IMR-90 (cell line): ENCODE measurements at regions of chr14 and their contacts with region 1.

Region 1: DNA sequence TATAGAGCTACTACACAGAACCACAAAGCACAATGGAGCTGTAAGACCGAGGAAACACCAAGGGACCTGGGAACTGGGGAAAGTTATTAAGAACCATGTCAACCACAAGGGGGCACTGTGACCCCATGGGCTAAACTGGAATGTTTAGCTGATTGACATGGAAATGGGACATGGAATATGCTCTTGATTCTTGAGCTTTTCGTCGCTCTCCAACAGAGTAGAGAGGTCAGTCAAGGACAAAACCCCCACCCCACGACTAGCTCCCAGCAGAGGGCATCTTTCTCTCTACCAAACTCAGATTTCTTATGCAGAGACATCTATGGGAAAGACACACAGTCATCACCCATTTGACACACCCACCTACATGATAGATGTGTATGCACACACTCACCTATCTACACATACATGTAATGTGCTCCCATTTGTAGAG is 10.1 kb downstream of the NDRG2 start:
- DNase-seq: peak; percentile 83
- ATAC-seq: peak; percentile 90
- H3K4me3 ChIP-seq: no peak overlapping the region
- H3K27ac ChIP-seq: no peak overlapping the region
- H3K4me1 ChIP-seq: no peaks in the 10 kb centered on the region
- H3K27me3 ChIP-seq: peaks cover 23% of the 10 kb centered on the region
- CTCF ChIP-seq: peak; percentile 96
- POLR2A ChIP-seq: no peak
- RAD21 ChIP-seq: peak; percentile 96

Region 2: DNA sequence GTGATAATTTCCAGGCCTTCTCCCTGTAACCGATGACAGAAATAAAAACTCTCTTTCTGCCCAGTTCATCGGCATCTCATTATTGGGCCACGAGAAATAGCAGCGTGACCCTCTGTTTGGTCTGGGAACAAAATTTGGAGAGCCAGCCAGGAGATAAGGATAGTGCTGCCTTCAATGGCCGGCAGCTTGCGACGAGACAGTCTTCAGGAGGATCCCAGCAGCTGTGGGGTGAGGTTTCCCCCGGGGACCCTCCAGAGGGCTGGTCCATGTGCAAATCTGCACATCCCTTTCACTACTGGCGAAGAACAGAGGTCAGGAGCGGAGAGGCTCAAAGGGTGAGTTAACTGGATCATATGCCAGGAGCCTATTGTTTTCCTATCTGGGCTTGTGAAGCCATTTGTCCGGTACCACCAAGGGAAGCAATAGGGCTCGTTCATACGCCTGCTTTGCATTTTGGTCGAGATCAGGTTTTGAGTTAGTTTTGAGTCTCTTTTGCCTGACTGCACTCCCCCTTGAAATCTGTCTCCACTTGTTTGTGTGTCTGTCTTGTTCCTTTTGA is 10.9 kb before region 1 on chr14:
- CTCF ChIA-PET with region 1: interaction called, 24 read pairs
- POLR2A ChIA-PET with region 1: no interaction called
- dilution Hi-C with region 1: no loop called
- in situ Hi-C with region 1: no loop called
- intact Hi-C with region 1: no loop called
- DNase-seq: no peak
- ATAC-seq: no peak
- H3K4me3 ChIP-seq: no peak overlapping the region
- H3K27ac ChIP-seq: no peak overlapping the region
- H3K4me1 ChIP-seq: 0 out of 2 replicates have a peak, but pooled peaks cover under 1% of the 10 kb centered on the region
- H3K27me3 ChIP-seq: peaks cover 5% of the 10 kb centered on the region
- CTCF ChIP-seq: no peak
- POLR2A ChIP-seq: no peak
- RAD21 ChIP-seq: no peak

Region 3: DNA sequence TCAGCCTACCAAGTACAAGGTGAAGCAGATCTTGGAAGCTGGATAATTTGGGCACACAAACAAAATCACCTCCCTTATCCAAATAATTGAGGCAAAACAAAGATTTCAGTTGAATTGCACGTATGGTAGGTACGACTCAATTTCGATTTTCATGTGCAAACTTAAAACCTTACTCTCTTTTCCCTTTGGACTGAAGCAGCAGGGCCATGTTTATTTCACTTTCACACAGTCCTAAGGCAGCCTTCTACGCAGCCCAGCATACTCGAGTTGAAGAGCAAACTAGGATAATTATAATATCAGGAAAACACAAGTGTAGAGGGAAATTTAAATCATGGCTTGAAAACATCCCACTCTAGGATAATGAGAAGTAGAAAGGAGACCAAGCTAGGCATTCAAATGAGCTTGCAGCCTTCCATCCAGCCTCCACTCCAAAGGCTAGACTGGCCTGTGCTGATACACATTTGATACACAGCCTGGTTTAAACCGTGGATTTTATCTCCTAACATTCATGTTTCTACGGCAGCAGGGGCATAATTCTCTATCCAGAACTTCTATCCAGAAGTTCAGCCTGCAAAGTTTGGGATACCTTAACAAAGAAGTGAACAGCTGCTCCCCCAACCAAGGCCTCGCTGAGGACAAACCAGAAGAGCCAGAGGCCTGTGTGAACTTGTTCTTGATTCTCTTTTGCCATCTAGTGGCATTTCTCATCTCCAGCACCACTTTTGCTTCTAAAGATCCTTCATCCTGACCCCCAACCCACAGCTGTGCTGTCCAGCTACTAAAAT is 25.0 kb after region 1 on chr14:
- CTCF ChIA-PET with region 1: interaction called, 37 read pairs
- POLR2A ChIA-PET with region 1: no interaction called
- dilution Hi-C with region 1: no loop called
- in situ Hi-C with region 1: no loop called
- intact Hi-C with region 1: loop called (anchors 1 kb)
- DNase-seq: peak; percentile 67
- ATAC-seq: peak; percentile 81
- H3K4me3 ChIP-seq: no peak overlapping the region
- H3K27ac ChIP-seq: no peak overlapping the region
- H3K4me1 ChIP-seq: peaks cover 2% of the 10 kb centered on the region; the same call in 1 of the 2 replicates
- H3K27me3 ChIP-seq: peaks cover 36% of the 10 kb centered on the region
- CTCF ChIP-seq: peak; percentile 68
- POLR2A ChIP-seq: no peak
- RAD21 ChIP-seq: peak; percentile 70

Region 4: DNA sequence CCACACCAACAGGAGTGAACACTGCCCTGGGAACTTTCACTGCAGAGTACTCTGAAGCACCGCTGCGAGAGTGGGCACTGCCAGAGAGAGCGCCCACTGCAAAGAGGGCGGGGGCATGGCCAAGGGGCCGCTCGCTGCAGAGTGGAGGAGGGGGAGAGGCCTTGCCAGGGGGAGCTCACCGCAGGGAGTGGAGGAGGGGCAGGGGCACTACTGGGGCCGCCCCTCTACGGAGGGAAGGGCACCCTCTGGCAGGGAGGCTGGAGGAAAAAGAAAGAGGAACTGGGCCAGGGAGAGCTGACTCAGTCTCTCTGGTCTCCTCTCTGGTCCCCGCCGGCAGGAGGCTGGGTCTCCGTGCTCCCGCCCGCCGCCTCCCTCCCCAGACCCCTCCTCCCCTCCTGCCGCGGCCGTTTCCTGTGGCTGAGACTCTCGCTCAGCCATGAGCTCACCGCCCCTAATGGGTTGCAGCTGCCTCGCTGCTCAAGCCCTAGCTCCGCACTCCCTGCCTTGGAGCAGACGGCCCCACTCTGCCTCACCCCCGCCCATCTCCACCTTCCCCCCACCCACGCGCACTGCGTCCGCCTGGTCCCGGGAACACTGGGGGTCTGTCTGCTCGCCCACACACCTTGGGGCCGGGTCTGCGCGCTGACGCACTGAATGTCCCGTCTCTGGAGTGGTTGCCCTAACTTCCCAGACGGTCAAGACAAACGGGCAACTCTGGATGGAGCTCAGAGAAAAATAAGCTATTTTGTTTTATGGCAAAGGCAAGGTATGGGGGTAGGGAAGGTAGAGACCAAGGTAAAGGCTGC is 56.7 kb after region 1 on chr14:
- CTCF ChIA-PET with region 1: interaction called, 20 read pairs
- POLR2A ChIA-PET with region 1: no interaction called
- dilution Hi-C with region 1: no loop called
- in situ Hi-C with region 1: no loop called
- intact Hi-C with region 1: loop called (anchors 1 kb)
- DNase-seq: peak; percentile 95
- ATAC-seq: peak; percentile 73
- H3K4me3 ChIP-seq: peak overlapping the region; percentile 68
- H3K27ac ChIP-seq: peak overlapping the region; percentile 96
- H3K4me1 ChIP-seq: peaks cover 22% of the 10 kb centered on the region
- H3K27me3 ChIP-seq: no peaks in the 10 kb centered on the region
- CTCF ChIP-seq: no peak
- POLR2A ChIP-seq: peak; percentile 69; the same call in 1 of the 2 replicates
- RAD21 ChIP-seq: no peak

Region 5: DNA sequence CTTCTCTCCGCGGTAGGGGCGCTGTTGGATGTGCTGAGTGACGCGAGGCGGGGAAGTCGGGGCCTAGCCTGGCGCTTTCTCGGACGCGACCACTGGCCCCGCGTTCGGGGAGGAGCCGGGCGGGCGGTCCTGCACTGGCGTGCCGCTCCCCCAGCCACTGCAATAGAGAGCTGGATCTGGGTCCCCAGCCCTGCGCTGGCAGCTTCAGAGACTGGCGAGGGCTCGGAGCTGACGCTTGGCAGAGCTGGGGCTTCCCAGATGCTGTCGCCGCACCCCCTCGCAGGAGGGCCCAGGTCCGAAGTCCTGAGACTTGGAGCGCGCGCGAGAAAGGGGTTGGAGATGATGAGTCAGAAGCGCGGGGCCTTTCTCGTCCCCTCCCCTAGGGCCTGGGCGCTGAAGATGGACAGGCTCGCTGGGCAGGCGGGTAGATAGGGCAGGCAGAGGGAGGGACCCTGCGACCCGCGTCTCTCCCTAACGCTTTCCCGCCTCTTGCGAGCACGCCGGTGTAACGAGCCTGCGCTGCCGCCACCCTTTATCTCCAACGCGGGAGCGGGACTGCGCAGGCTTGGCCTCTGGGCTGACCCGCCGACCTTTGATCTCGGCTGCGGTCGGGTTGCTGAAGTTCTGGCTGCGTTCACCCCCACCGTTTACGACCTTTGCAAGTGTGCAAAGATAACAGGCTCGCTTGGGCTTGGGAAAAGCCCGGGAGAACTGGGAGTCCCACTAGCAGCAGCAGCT is 89.1 kb after region 1 on chr14:
- CTCF ChIA-PET with region 1: interaction called, 44 read pairs
- POLR2A ChIA-PET with region 1: no interaction called
- dilution Hi-C with region 1: no loop called
- in situ Hi-C with region 1: loop called (anchors 5 kb)
- intact Hi-C with region 1: loop called (anchors 1 kb)
- DNase-seq: peak; percentile 94
- ATAC-seq: peak; percentile 92
- H3K4me3 ChIP-seq: peak overlapping the region; percentile 60
- H3K27ac ChIP-seq: peak overlapping the region; percentile 94
- H3K4me1 ChIP-seq: peaks cover 6% of the 10 kb centered on the region
- H3K27me3 ChIP-seq: no peaks in the 10 kb centered on the region
- CTCF ChIP-seq: peak; percentile 94
- POLR2A ChIP-seq: peak; percentile 64; the same call in 1 of the 2 replicates
- RAD21 ChIP-seq: no peak